H1 (cell line): ENCODE measurements at regions of chr13 and their contacts with region 1.

Region 1: DNA sequence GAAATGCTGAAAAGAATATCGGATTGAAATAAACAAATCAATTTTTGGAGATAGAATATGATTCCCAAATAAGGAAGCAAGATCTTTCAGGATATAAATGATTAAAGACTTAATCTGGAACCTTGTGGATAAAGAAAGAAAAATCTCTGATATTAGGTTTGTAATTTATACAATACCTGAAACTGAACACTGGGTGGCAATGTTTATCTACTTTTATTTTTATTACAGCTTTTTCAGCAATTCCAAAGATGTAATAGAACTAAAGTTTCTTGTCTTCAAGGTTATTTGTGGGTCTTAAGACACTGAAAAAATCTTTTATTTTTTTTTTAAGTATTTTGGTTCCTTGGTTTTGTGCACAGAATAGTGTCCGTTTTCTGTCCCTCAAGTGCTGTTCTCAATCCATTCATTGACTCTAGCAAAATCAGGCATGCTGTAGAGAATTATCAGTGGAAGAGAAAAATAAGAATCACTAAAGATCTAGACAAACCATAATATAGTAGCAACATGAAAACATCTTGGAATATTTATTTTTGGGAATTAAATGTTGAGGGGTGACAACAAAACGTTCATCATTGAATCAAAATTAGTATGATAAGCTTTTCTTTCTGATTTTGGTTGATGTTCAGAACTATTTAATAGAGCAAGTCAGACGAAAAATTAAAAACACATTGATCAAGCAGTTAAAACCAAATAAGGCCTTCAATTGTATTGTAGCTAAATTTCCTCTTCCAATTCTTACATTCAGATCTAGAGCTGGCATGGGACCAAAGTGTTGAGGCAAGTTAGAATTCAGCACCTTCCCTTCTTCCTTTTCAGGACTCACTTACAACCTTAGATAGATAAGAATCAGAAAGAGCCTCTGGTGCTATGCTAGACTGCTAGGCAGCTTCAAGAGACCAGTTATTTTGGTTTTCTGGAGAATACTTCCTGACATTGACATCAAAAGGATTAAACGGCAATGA is 704.4 kb upstream of the PCDH20 start:
- DNase-seq: no peak
- H3K4me3 ChIP-seq: no peak overlapping the region
- H3K27ac ChIP-seq: no peak overlapping the region
- H3K4me1 ChIP-seq: no peaks in the 10 kb centered on the region
- H3K27me3 ChIP-seq: no peaks in the 10 kb centered on the region
- CTCF ChIP-seq: no peak; a peak in 1 of 4 replicates
- EP300 ChIP-seq: no peak
- POLR2A ChIP-seq: no peak
- RAD21 ChIP-seq: peak in 1 of 2 experiments; percentile 63

Region 2: GRCh38 chr13:62162860-62163259 is 42.8 kb after region 1 on chr13:
- CTCF ChIA-PET with region 1: no interaction called
- POLR2A ChIA-PET with region 1: no interaction called
- DNase-seq: no peak
- H3K4me3 ChIP-seq: no peak overlapping the region
- H3K27ac ChIP-seq: no peak overlapping the region
- H3K4me1 ChIP-seq: no peaks in the 10 kb centered on the region
- H3K27me3 ChIP-seq: no peaks in the 10 kb centered on the region
- CTCF ChIP-seq: no peak
- EP300 ChIP-seq: no peak
- POLR2A ChIP-seq: no peak
- RAD21 ChIP-seq: no peak

Region 3: GRCh38 chr13:62309904-62310303 is 189.9 kb after region 1 on chr13:
- CTCF ChIA-PET with region 1: interaction called, 16 read pairs
- POLR2A ChIA-PET with region 1: no interaction called
- DNase-seq: peak in 1 of 2 experiments; percentile 13
- H3K4me3 ChIP-seq: no peak overlapping the region
- H3K27ac ChIP-seq: no peak overlapping the region
- H3K4me1 ChIP-seq: peaks cover 0 to 9% (median 3%) of the 10 kb centered on the region in 4 experiments; a peak in 5 of 7 replicates
- H3K27me3 ChIP-seq: no peaks in the 10 kb centered on the region
- CTCF ChIP-seq: no peak
- EP300 ChIP-seq: peak in 1 of 2 experiments; percentile 57; a peak in 1 of 3 replicates
- POLR2A ChIP-seq: no peak
- RAD21 ChIP-seq: no peak

Region 4: GRCh38 chr13:62320129-62321108 is 200.4 kb after region 1 on chr13:
- CTCF ChIA-PET with region 1: interaction called, 15 read pairs
- POLR2A ChIA-PET with region 1: no interaction called
- DNase-seq: no peak
- H3K4me3 ChIP-seq: no peak overlapping the region
- H3K27ac ChIP-seq: no peak overlapping the region
- H3K4me1 ChIP-seq: no peaks in the 10 kb centered on the region
- H3K27me3 ChIP-seq: peaks cover 0 to 1% (median 0%) of the 10 kb centered on the region in 4 experiments; a peak in 1 of 7 replicates
- CTCF ChIP-seq: peak in 2 of 3 experiments; percentile 26 to 40; a peak in 2 of 4 replicates
- EP300 ChIP-seq: no peak
- POLR2A ChIP-seq: no peak
- RAD21 ChIP-seq: peak; percentile 75 to 83